ENCODE measurements at regions of chr20 and their contacts with region 1.

Region 1: DNA sequence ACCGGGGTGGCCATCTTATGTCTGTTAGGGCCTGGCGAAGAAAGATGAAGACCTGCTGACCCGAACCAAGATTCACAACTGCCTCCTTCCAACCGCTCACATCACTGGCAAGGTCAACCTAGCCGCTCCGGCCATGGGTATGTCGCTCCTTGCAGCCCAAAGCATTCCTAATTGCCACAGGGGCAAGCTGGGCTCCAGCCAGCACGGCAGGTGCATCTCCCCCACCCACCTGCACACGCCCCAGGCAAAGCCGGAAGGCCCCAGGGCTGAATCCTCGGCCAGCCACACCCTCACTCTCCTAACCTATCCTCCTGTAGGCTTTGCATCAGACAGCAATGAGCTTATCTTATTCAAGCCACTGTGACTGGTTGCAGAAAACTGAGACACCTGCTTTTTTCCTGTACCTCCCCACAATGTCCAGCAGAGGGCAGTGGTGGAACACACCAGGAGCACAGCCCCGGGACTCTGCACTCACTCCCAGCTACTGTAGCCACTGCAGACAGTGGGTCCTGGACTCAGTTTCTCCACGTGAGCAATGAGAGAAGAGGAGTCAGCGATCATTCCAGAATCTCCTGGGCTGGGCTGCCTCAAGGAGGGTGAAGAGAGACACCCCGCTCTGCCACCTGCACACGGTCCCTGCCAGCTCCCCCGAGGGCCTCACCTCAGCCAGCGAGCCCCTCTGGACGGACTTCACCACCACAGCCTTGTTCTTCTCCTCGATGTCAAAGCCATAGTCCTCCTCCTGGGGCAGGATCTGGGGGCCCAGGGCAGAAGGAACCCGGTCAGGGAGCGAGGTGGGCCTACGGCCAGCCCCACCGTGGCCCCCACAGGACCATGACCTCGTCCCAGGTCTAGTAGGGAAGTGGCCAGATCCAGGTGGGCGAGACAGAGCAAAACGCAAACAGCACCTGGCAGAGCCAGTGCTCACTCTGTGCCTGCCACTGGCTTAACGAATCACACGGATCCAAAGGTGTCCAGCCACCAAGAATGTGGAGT is 170.0 kb downstream of the PREX1 start:
- DNase-seq: peak; percentile 74
- ATAC-seq: peak; percentile 87

Region 2: DNA sequence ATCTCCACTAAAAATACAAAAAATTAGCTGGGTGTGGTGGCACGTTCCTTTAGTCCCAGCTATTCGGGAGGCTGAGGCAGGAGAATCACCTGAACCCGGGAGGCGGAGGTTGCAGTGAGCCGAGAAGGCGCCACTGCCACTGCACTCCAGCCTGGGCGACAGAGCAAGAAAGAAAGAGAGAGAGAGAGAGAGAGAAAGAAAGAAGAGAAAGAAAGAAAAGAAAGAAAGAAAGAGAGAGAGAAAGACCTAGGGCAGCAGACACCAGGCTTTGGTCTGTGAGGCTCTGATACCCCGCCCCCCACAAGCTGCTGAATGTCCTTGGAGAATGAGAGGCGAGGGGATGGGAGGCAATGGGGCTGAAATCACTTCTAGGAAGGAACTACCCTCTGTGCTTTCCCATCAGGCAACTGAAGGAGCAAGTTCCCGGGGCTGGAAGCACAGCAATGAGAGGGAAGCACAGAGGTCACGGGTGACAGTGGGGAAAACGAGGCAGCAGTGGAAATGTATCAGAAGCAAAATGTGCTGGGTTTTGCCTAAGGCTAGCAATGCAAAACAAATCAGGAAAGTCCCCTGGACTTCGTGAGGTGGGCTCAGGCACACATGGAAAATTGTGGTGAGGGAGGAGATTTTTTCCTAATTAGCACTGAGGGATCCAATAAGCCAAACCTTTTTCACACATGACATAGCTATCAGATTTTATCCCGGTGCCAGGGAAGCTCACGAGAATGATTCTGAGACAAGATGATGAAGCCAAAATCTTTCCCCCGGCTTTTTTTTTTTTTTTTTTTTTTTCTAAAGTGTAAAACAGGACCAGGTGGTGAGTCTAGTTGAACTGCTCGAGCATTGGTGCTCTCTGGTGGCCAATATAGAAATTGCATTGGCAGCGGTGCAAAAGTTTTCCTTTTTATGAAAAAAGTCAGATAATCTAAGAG is 246.9 kb after region 1 on chr20:
- intact Hi-C with region 1: loop called (anchors 2 kb)
- DNase-seq: no peak
- ATAC-seq: peak; percentile 71